Heart left ventricle (tissue), 16 donors: ENCODE measurements at regions of chr15 and their contacts with region 1.

Region 1: GRCh38 chr15:67456677-67457529 is 64.0 kb upstream of the C15orf61 start:
- DNase-seq: peak; percentile 80 to 87 (median 81)
- ATAC-seq: peak in 3 of 4 donors; percentile 79 to 87 (median 86)
- H3K4me3 ChIP-seq: no peak overlapping the region
- H3K27ac ChIP-seq: no peak overlapping the region
- H3K4me1 ChIP-seq: peaks cover 0 to 5% (median 0%) of the 10 kb centered on the region in 12 donors
- H3K27me3 ChIP-seq: no peaks in the 10 kb centered on the region
- CTCF ChIP-seq: peak; percentile 80 to 90 (median 88)
- POLR2A ChIP-seq: no peak

Region 2: DNA sequence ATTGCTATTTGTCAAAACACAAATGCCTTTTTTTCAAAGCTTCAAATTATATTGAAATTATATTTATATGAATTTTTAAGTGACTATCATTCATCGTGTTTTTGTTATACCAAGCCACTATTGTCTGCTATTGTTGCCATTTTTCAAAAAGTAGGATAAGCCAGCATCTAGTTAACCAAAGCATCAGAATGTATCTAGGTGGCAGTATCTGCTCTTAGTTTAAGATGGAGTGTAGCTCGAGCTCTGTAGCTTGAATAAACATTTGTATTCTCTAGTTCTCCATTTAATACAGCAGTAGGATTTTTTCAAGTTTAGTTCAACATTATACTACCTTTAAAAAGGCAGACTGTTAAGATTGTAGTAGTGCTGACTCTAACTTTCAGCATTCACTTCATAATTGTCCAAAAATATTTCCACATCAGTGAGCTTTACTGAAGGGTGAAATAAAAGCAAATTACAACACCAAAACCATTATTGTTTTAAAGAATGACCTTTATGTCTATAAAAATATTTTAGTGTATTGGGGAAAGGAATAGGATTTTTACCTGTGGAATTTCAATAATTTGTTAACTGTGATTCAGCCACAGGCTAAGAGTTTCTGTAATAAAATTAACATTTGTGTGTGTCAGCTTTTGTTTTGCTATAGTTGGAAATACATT is 44.4 kb after region 1 on chr15:
- intact Hi-C with region 1: no loop called
- DNase-seq: no peak
- ATAC-seq: peak in 1 of 4 donors; percentile 39
- H3K4me3 ChIP-seq: peak overlapping the region in 1 of 12 donors; percentile 5
- H3K27ac ChIP-seq: no peak overlapping the region
- H3K4me1 ChIP-seq: peaks cover 0 to 6% (median 0%) of the 10 kb centered on the region in 12 donors
- H3K27me3 ChIP-seq: no peaks in the 10 kb centered on the region
- CTCF ChIP-seq: peak in 9 of 12 donors; percentile 10 to 52 (median 38)
- POLR2A ChIP-seq: no peak

Region 3: GRCh38 chr15:67542420-67543347 is 85.8 kb after region 1 on chr15 and contains the start of gene MAP2K5:
- intact Hi-C with region 1: loop called in 1 of 10 experiments (anchors 10 kb)
- DNase-seq: peak; percentile 90 to 95 (median 92)
- ATAC-seq: peak; percentile 79 to 97 (median 95)
- H3K4me3 ChIP-seq: peak within 1 kb of the TSS; percentile 45 to 98 (median 88)
- H3K27ac ChIP-seq: peak within 1 kb of the TSS; percentile 63 to 95 (median 88)
- H3K4me1 ChIP-seq: peaks cover 0 to 32% (median 16%) of the 10 kb centered on the region in 12 donors
- H3K27me3 ChIP-seq: no peaks in the 10 kb centered on the region
- CTCF ChIP-seq: no peak
- POLR2A ChIP-seq: peak; percentile 17 to 79
- total RNA-seq, gene MAP2K5: 9.9 to 32.0 (median 22.7) TPM

Region 4: GRCh38 chr15:67833710-67834511 is 377.0 kb after region 1 on chr15:
- intact Hi-C with region 1: loop called (anchors 1 to 2 kb)
- DNase-seq: peak in 1 of 5 donors; percentile 74
- ATAC-seq: peak in 3 of 4 donors; percentile 13 to 37 (median 30)
- H3K4me3 ChIP-seq: peak overlapping the region in 10 of 12 donors; percentile 25 to 59 (median 45)
- H3K27ac ChIP-seq: no peak overlapping the region
- H3K4me1 ChIP-seq: peaks cover 2 to 61% (median 48%) of the 10 kb centered on the region in 12 donors
- H3K27me3 ChIP-seq: peaks cover 50 to 74% (median 71%) of the 10 kb centered on the region in 9 donors
- CTCF ChIP-seq: peak; percentile 16 to 59 (median 44)
- POLR2A ChIP-seq: no peak